CD8-positive, alpha-beta T cell (primary cell): ENCODE measurements at regions of chr12 and their contacts with region 1.

Region 1: GRCh38 chr12:100200463-100201181 is at the start of gene ACTR6:
- DNase-seq: peak; percentile 96 to 99 (median 98)
- ATAC-seq: peak; percentile 82
- H3K4me3 ChIP-seq: peak within 1 kb of the TSS; percentile 57 to 75
- H3K4me3 Mint-ChIP-seq: peak within 1 kb of the TSS; percentile 97
- H3K27ac ChIP-seq: peak within 1 kb of the TSS; percentile 90 to 91
- H3K27ac Mint-ChIP-seq: peak within 1 kb of the TSS; percentile 100
- H3K4me1 ChIP-seq: peaks cover 19% of the 10 kb centered on the region
- H3K4me1 Mint-ChIP-seq: peaks cover 41% of the 10 kb centered on the region
- H3K27me3 ChIP-seq: no peaks in the 10 kb centered on the region
- H3K27me3 Mint-ChIP-seq: no peaks in the 10 kb centered on the region
- CTCF ChIP-seq: no peak
- total RNA-seq, gene ACTR6: 18.8 to 21.4 TPM

Region 2: GRCh38 chr12:98516184-98516873 is 1684.3 kb before region 1 on chr12:
- CTCF ChIA-PET with region 1: no interaction called
- POLR2A ChIA-PET with region 1: no interaction called
- intact Hi-C with region 1: loop called (anchors 5 to 10 kb)
- DNase-seq: peak; percentile 58 to 95 (median 82)
- ATAC-seq: peak; percentile 67
- H3K4me3 ChIP-seq: peak overlapping the region; percentile 68 to 88
- H3K4me3 Mint-ChIP-seq: peak overlapping the region; percentile 99
- H3K27ac ChIP-seq: peak overlapping the region; percentile 55 to 77
- H3K27ac Mint-ChIP-seq: peak overlapping the region; percentile 98
- H3K4me1 ChIP-seq: peaks cover 50% of the 10 kb centered on the region
- H3K4me1 Mint-ChIP-seq: peaks cover 57% of the 10 kb centered on the region
- H3K27me3 ChIP-seq: no peaks in the 10 kb centered on the region
- H3K27me3 Mint-ChIP-seq: no peaks in the 10 kb centered on the region
- CTCF ChIP-seq: peak; percentile 90

Region 3: GRCh38 chr12:100154474-100155247 is 46.0 kb before region 1 on chr12:
- CTCF ChIA-PET with region 1: interaction called, 4 read pairs
- POLR2A ChIA-PET with region 1: interaction called, 4 read pairs
- intact Hi-C with region 1: loop called (anchors 2 kb)
- DNase-seq: peak; percentile 46 to 81 (median 72)
- ATAC-seq: peak; percentile 72
- H3K4me3 ChIP-seq: no peak overlapping the region
- H3K4me3 Mint-ChIP-seq: no peak overlapping the region
- H3K27ac ChIP-seq: no peak overlapping the region
- H3K27ac Mint-ChIP-seq: no peak overlapping the region
- H3K4me1 ChIP-seq: peaks cover 4% of the 10 kb centered on the region
- H3K4me1 Mint-ChIP-seq: peaks cover 4% of the 10 kb centered on the region
- H3K27me3 ChIP-seq: no peaks in the 10 kb centered on the region
- H3K27me3 Mint-ChIP-seq: no peaks in the 10 kb centered on the region
- CTCF ChIP-seq: peak; percentile 84

Region 4: DNA sequence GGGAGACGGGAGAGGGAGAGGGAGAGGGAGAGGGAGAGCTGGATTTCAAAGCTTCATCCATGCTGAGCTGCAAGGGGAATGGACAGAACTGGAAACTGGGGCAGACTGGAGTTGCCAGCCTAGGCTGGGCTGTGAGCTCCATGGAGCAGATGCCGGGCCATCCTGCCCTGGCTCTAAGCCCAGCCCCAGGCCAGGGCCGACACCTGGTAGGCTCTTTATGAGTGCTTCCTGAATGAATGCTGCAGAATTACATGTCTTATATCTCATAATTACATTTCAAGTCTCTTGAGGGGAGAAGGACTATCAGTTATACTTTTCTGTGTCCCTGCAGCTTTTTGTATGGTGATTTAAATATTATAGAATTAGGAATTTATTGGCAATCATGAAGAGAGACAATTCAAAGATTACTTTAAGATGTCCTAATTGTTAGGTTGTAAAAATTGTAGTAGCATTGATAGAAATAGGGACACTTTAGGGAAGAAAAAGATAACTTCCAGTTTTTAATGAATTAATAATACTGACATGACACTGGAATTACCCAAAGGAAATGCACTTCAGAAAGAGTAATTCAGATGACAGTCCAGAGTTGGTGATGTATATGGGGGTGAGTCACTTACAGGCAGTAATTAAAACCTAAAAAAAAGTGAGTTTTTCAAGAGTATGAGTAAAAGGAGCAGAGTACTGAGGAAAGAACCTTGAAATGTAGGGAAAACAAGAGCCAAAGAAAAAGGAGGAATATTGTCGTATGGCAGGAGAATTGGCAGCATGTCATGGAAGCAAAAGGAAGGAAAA is 95.3 kb after region 1 on chr12:
- CTCF ChIA-PET with region 1: no interaction called
- POLR2A ChIA-PET with region 1: no interaction called
- intact Hi-C with region 1: no loop called
- DNase-seq: no peak
- ATAC-seq: no peak
- H3K4me3 ChIP-seq: no peak overlapping the region
- H3K4me3 Mint-ChIP-seq: no peak overlapping the region
- H3K27ac ChIP-seq: no peak overlapping the region
- H3K27ac Mint-ChIP-seq: no peak overlapping the region
- H3K4me1 ChIP-seq: no peaks in the 10 kb centered on the region
- H3K4me1 Mint-ChIP-seq: no peaks in the 10 kb centered on the region
- H3K27me3 ChIP-seq: no peaks in the 10 kb centered on the region
- H3K27me3 Mint-ChIP-seq: no peaks in the 10 kb centered on the region
- CTCF ChIP-seq: no peak

Region 5: DNA sequence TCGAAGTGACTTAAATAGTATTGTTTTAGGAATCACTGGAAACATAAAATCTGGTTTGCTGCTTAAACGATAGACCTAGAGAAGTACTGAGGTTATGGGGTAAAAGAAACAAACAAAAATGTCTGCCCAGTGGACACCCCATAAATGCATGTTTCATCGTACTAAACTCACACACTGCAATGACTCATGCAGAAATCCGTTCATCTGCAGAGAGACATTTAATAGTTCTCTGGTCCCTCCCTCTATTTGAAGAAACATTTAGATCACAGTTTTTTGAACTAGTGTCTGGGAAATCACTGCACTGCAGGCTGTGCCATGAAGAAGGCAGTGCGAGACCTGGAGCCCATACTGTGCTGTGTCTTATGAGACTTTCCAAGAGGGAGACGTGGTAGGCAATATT is 181.7 kb after region 1 on chr12:
- CTCF ChIA-PET with region 1: no interaction called
- POLR2A ChIA-PET with region 1: no interaction called
- intact Hi-C with region 1: no loop called
- DNase-seq: no peak
- ATAC-seq: no peak
- H3K4me3 ChIP-seq: no peak overlapping the region
- H3K4me3 Mint-ChIP-seq: no peak overlapping the region
- H3K27ac ChIP-seq: no peak overlapping the region
- H3K27ac Mint-ChIP-seq: no peak overlapping the region
- H3K4me1 ChIP-seq: no peaks in the 10 kb centered on the region
- H3K4me1 Mint-ChIP-seq: no peaks in the 10 kb centered on the region
- H3K27me3 ChIP-seq: no peaks in the 10 kb centered on the region
- H3K27me3 Mint-ChIP-seq: no peaks in the 10 kb centered on the region
- CTCF ChIP-seq: no peak

Region 6: DNA sequence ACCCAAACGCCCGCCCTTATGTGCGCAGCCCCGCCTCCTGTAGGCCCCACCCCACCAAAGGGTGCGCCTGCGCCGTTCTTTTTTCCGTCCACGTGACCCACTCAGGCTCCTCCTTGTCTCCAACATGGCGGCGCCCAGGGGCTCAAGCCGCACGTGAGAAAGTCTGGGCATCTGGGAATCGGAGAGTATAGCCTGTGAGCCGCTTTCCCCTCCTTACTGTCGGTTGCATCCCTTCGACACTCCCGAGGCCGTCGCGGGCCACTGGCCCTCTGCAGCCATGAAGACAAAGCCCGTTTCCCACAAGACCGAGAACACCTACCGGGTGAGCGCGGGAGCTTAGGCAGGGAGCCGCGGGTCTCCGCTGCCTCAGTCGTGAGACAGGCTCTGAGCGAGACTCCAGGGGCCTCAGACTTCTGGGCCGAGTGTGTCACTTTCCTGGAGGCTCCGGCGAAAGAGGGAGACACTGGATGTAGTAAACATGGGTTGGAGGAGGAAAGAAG is 1079.4 kb after region 1 on chr12 and contains the start of gene UTP20:
- CTCF ChIA-PET with region 1: no interaction called
- POLR2A ChIA-PET with region 1: no interaction called
- intact Hi-C with region 1: loop called (anchors 1 to 2 kb)
- DNase-seq: peak; percentile 84 to 96 (median 94)
- ATAC-seq: peak; percentile 100
- H3K4me3 ChIP-seq: peak within 1 kb of the TSS; percentile 98 to 100
- H3K4me3 Mint-ChIP-seq: peak within 1 kb of the TSS; percentile 96
- H3K27ac ChIP-seq: peak within 1 kb of the TSS; percentile 30 to 65
- H3K27ac Mint-ChIP-seq: peak within 1 kb of the TSS; percentile 80
- H3K4me1 ChIP-seq: peaks cover 11% of the 10 kb centered on the region
- H3K4me1 Mint-ChIP-seq: peaks cover 26% of the 10 kb centered on the region
- H3K27me3 ChIP-seq: peaks cover 0 to 4% of the 10 kb centered on the region in 2 experiments
- H3K27me3 Mint-ChIP-seq: peaks cover 6% of the 10 kb centered on the region
- CTCF ChIP-seq: no peak
- total RNA-seq, gene UTP20: 11.2 to 12.9 TPM

Region 7: GRCh38 chr12:102119674-102120563 is 1919.3 kb after region 1 on chr12 and contains the starts of genes NUP37 and PARPBP:
- CTCF ChIA-PET with region 1: no interaction called
- POLR2A ChIA-PET with region 1: no interaction called
- intact Hi-C with region 1: loop called in 1 of 2 experiments (anchors 2 kb)
- DNase-seq: peak; percentile 86 to 95 (median 92)
- ATAC-seq: peak; percentile 86
- H3K4me3 ChIP-seq: peak within 1 kb of the TSS; percentile 65 to 91
- H3K4me3 Mint-ChIP-seq: peak within 1 kb of the TSS; percentile 85
- H3K27ac ChIP-seq: peak within 1 kb of the TSS; percentile 70 to 86
- H3K27ac Mint-ChIP-seq: peak within 1 kb of the TSS; percentile 95
- H3K4me1 ChIP-seq: peaks cover 14% of the 10 kb centered on the region
- H3K4me1 Mint-ChIP-seq: peaks cover 28% of the 10 kb centered on the region
- H3K27me3 ChIP-seq: no peaks in the 10 kb centered on the region
- H3K27me3 Mint-ChIP-seq: no peaks in the 10 kb centered on the region
- CTCF ChIP-seq: no peak
- total RNA-seq, gene NUP37: 8.8 to 11.3 TPM
- total RNA-seq, gene PARPBP: 1.8 to 2.4 TPM